Activated CD4-positive, alpha-beta memory T cell treated with anti-CD3 and anti-CD28 coated beads for 36 hours (primary cell): ENCODE measurements at regions of chr3 and their contacts with region 1.

Region 1: DNA sequence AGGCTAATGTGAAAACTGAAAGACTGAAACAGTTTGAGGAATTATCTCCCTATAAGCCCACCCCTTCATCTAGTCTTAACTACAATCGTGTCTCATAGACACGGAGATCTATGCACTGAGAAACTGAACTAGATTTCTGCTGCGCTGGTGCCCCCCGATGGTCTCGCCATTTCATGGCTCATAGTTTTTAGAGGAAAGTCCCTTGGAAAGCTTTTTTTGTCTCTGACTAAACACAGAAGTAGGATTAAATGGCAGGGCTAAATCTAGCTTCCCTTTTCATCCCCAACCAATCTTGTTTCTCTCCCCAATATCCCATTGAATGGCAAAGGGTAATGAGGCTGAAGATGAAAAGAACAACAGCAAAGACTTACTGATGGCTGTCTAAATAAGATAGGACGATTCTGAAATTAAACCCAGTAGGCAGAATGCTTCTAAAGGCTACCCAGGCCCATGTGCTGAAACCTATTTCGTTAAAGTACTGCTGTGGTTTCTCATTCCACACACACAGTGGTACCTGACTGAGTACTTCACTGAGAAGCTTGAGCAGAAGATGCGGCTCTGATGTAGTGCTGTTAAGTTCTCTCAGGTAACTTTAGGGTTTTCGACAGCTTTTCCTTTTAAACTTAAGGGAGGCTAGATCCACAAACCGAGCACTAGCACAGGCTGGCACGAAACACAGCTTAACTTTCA is 142.7 kb downstream of the GADL1 start:
- DNase-seq: peak; percentile 76
- H3K4me3 Mint-ChIP-seq: no peak overlapping the region
- H3K27ac Mint-ChIP-seq: no peak overlapping the region
- H3K4me1 Mint-ChIP-seq: peaks cover 23% of the 10 kb centered on the region
- H3K27me3 Mint-ChIP-seq: peaks cover 2% of the 10 kb centered on the region

Region 2: GRCh38 chr3:30012941-30013543 is 738.7 kb before region 1 on chr3:
- CTCF ChIA-PET with region 1: interaction called, 3 read pairs
- POLR2A ChIA-PET with region 1: no interaction called
- intact Hi-C with region 1: loop called (anchors 1 kb)
- DNase-seq: peak; percentile 48
- H3K4me3 Mint-ChIP-seq: no peak overlapping the region
- H3K27ac Mint-ChIP-seq: no peak overlapping the region
- H3K4me1 Mint-ChIP-seq: no peaks in the 10 kb centered on the region
- H3K27me3 Mint-ChIP-seq: peaks cover 11% of the 10 kb centered on the region

Region 3: GRCh38 chr3:30042274-30042859 is 709.4 kb before region 1 on chr3:
- CTCF ChIA-PET with region 1: interaction called, 8 read pairs
- POLR2A ChIA-PET with region 1: no interaction called
- intact Hi-C with region 1: loop called (anchors 1 kb)
- DNase-seq: peak; percentile 58
- H3K4me3 Mint-ChIP-seq: no peak overlapping the region
- H3K27ac Mint-ChIP-seq: no peak overlapping the region
- H3K4me1 Mint-ChIP-seq: no peaks in the 10 kb centered on the region
- H3K27me3 Mint-ChIP-seq: peaks cover 21% of the 10 kb centered on the region

Region 4: GRCh38 chr3:30112902-30113484 is 638.8 kb before region 1 on chr3:
- CTCF ChIA-PET with region 1: interaction called, 6 read pairs
- POLR2A ChIA-PET with region 1: no interaction called
- intact Hi-C with region 1: loop called (anchors 1 kb)
- DNase-seq: no peak
- H3K4me3 Mint-ChIP-seq: no peak overlapping the region
- H3K27ac Mint-ChIP-seq: no peak overlapping the region
- H3K4me1 Mint-ChIP-seq: peaks cover 3% of the 10 kb centered on the region
- H3K27me3 Mint-ChIP-seq: no peaks in the 10 kb centered on the region

Region 5: GRCh38 chr3:30628901-30629590 is 122.7 kb before region 1 on chr3:
- CTCF ChIA-PET with region 1: no interaction called
- POLR2A ChIA-PET with region 1: no interaction called
- intact Hi-C with region 1: loop called (anchors 5 kb)
- DNase-seq: no peak
- H3K4me3 Mint-ChIP-seq: peak overlapping the region; percentile 45
- H3K27ac Mint-ChIP-seq: peak overlapping the region; percentile 91
- H3K4me1 Mint-ChIP-seq: peaks cover 90% of the 10 kb centered on the region
- H3K27me3 Mint-ChIP-seq: no peaks in the 10 kb centered on the region

Region 6: GRCh38 chr3:30708472-30708871 is 43.3 kb before region 1 on chr3:
- CTCF ChIA-PET with region 1: no interaction called
- POLR2A ChIA-PET with region 1: no interaction called
- intact Hi-C with region 1: no loop called
- DNase-seq: no peak
- H3K4me3 Mint-ChIP-seq: no peak overlapping the region
- H3K27ac Mint-ChIP-seq: no peak overlapping the region
- H3K4me1 Mint-ChIP-seq: peaks cover 4% of the 10 kb centered on the region
- H3K27me3 Mint-ChIP-seq: no peaks in the 10 kb centered on the region

Region 7: DNA sequence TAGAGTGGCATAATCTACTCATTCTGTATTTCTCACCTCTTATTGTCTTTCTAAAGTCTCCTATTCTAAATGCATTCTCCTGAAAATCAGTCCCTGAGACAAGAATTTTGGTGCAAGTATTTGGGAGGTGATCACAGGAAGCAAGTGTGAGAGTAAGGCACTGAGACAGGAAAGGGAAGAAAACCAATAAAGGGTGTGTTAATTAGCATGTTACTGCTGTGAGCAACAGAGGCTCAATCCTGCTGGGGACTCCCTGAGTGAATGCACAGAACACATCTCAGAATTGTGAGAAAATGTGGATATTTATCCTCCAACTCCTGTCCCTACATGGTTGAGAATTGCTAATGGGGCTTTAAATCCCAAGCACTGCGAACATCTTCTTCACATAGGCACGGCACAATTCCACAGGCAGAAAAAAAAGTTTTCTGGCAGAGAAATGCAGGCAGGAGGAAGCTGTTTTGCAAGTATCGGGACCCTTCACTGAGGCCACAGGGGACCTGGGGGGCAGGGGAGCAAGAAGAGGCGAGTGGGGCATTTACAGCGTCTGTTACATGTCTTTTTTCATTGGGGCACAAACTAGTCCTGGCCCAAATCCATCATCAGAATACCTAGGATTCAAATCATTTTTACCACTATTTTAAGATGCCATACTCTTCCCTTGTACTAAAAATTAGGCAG is 753.8 kb after region 1 on chr3:
- CTCF ChIA-PET with region 1: no interaction called
- POLR2A ChIA-PET with region 1: no interaction called
- intact Hi-C with region 1: no loop called
- DNase-seq: no peak
- H3K4me3 Mint-ChIP-seq: no peak overlapping the region
- H3K27ac Mint-ChIP-seq: no peak overlapping the region
- H3K4me1 Mint-ChIP-seq: peaks cover 61% of the 10 kb centered on the region
- H3K27me3 Mint-ChIP-seq: no peaks in the 10 kb centered on the region